ENCODE measurements at regions of chr20 and their contacts with region 1.

Region 1: GRCh38 chr20:1830240-1830639 is 65.0 kb upstream of the SIRPA start:
- DNase-seq: peak; percentile 79 to 91
- ATAC-seq: peak; percentile 77 to 87
- H3K4me3 ChIP-seq: no peak overlapping the region
- H3K27ac ChIP-seq: peak overlapping the region; percentile 32 to 69; a peak in 4 of 6 replicates
- H3K4me1 ChIP-seq: peaks cover 36% of the 10 kb centered on the region
- CTCF ChIP-seq: no peak
- EP300 ChIP-seq: peak in 1 of 2 experiments; percentile 57; a peak in 1 of 5 replicates
- POLR2A ChIP-seq: no peak
- RAD21 ChIP-seq: peak in 1 of 2 experiments; percentile 7; a peak in 1 of 5 replicates

Region 2: DNA sequence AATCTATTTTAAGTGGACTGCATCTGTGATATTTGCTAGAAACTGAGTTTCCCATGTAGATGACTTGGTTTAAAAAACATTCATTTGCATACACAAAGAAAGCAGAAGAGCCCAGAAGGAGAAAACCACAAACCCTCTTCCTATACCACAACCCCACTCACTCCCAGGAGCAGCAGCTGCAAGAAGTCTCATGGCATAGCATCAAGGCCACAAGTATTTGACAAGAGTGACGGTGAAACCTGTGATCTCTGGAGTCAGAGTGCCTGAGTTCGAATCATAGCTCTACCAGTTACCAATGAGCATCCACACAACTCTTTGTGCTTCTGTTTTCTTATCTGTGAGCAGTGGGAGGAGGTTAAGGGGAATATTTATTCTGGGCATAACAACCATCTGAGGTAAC is 127.9 kb before region 1 on chr20:
- CTCF ChIA-PET with region 1: no interaction called
- POLR2A ChIA-PET with region 1: no interaction called
- DNase-seq: no peak
- ATAC-seq: no peak
- H3K4me3 ChIP-seq: no peak overlapping the region
- H3K27ac ChIP-seq: no peak overlapping the region
- H3K4me1 ChIP-seq: no peaks in the 10 kb centered on the region
- CTCF ChIP-seq: no peak
- EP300 ChIP-seq: no peak
- POLR2A ChIP-seq: no peak
- RAD21 ChIP-seq: no peak

Region 3: DNA sequence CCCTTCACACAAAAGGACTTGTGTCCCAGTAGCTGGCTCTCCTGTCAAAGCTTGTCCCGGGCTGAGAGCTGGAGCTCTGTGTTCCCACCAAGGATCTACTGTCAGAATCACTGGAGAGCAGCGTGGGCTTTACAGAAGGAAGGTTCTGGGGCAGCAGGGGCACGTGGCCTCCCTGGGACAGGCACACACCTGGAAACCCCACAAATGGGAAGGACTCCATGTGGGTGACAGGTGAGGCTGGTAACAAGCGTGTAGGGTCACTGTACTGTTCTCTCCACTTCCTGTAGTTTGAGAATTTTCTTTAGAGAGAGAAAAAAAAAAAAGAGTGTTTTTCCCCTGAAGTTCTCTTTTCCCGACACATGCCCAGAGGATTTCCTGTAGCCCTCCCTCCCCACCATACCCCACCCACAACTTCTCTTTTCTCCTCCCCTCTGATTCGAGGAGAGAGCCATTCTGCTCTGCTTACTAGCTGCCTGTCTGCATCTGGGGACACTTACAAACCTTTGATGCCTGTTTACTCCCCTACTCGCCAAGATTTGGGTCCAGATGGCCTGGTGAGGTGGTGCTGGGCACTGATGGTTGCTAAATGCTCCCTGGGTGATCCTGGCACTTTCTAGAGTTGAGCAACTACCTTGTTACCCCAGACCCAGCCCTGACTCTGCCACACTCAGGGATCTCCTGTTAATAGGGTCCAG is 19.2 kb before region 1 on chr20:
- CTCF ChIA-PET with region 1: interaction called, 17 read pairs
- POLR2A ChIA-PET with region 1: interaction called, 5 read pairs
- DNase-seq: no peak
- ATAC-seq: peak in 1 of 2 experiments; percentile 6; a peak in 2 of 6 replicates
- H3K4me3 ChIP-seq: no peak overlapping the region
- H3K27ac ChIP-seq: peak overlapping the region; percentile 85 to 87
- H3K4me1 ChIP-seq: peaks cover 74% of the 10 kb centered on the region
- CTCF ChIP-seq: no peak
- EP300 ChIP-seq: no peak
- POLR2A ChIP-seq: no peak
- RAD21 ChIP-seq: no peak